Activated CD4-positive, alpha-beta memory T cell treated with anti-CD3 and anti-CD28 coated beads for 36 hours (primary cell): ENCODE measurements at regions of chr9 and their contacts with region 1.

Region 1: GRCh38 chr9:136671646-136672430 is 9.1 kb downstream of the EGFL7 start:
- DNase-seq: peak; percentile 48
- H3K4me3 Mint-ChIP-seq: no peak overlapping the region
- H3K27ac Mint-ChIP-seq: no peak overlapping the region
- H3K4me1 Mint-ChIP-seq: no peaks in the 10 kb centered on the region
- H3K27me3 Mint-ChIP-seq: peaks cover 5% of the 10 kb centered on the region

Region 2: DNA sequence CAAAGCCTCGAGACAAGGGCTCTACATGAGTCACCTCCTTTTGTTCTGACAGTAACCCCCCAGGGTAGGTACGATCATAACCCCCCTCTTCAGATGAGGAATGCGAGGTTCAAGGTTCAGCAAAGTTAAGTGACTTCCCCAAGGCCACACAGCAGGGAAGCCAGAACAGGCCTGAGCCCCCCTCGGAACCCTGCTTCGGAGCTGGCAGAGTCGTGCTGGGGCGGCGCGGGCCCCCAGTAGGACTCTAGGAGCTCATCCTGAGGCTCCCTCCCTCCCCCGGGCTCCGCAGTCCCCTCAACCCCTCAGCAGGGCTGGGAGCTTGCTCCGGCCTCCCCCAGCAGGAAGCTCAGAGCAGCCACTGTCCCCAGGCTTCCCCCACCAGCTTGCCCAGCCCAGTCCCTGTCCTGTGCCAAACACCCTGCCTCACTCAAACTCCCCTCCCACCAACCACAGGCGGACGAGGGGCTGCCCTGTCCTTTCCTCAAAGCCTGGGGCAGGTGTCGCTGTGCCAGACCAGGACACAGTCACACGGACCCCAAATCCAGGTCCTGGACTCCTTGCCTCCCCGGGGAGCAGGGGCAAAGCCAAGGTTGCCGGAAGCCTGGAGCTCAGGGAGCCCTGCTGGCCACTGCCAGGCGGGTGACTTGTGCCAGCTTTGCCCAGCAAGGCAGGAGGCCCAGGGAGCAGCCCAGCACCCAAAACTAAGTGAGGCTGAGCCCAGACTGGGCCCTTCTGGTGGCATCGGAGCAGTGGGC is 10.3 kb after region 1 on chr9:
- CTCF ChIA-PET with region 1: interaction called, 10 read pairs
- POLR2A ChIA-PET with region 1: no interaction called
- intact Hi-C with region 1: no loop called
- DNase-seq: no peak
- H3K4me3 Mint-ChIP-seq: no peak overlapping the region
- H3K27ac Mint-ChIP-seq: no peak overlapping the region
- H3K4me1 Mint-ChIP-seq: no peaks in the 10 kb centered on the region
- H3K27me3 Mint-ChIP-seq: no peaks in the 10 kb centered on the region